Activated naive CD4-positive, alpha-beta T cell treated with anti-CD3 and anti-CD28 coated beads, Interleukin-2, amount 10 ng/mL, durations not matched to agents 7 days and 5 days (primary cell): ENCODE measurements at regions of chr5 and their contacts with region 1.

Region 1: GRCh38 chr5:170434966-170435605 is 45.9 kb upstream of the KCNMB1 start:
- DNase-seq: peak; percentile 69
- H3K4me3 Mint-ChIP-seq: no peak overlapping the region
- H3K27ac Mint-ChIP-seq: no peak overlapping the region
- H3K4me1 Mint-ChIP-seq: no peaks in the 10 kb centered on the region
- H3K27me3 Mint-ChIP-seq: peaks cover 34% of the 10 kb centered on the region

Region 2: DNA sequence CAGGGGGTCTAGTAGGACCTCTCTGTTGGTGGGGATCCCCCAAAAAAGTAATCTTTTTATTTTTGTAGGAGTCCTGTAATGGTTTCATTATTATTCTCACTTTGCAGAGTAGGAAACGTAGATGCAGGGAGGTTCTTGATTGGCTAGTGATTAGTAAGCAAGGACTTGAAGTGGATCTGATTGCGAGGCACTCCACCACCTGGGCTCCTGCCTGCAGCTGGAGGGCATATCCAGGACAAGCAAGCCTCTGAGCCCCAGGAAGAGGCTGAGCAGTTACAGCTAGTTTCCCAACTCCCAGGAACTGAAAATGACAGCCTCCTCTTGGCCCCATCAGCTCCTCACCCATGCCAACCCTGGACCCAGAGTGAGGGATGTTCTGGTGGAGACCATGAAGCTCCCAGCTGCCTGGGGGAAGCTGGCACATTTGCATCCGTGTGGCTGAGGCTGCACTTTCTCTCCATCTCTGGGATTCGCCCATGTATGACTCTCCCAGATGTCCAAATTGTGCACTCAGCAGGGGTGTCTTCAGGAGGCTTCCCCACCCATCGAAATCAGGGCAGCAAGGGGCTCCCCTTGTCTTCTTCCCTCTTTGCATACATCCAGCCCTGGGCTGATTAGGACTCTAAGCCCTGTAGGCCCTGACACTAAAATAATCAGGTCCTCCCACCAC is 78.9 kb after region 1 on chr5:
- CTCF ChIA-PET with region 1: no interaction called
- DNase-seq: no peak
- H3K4me3 Mint-ChIP-seq: no peak overlapping the region
- H3K27ac Mint-ChIP-seq: no peak overlapping the region
- H3K4me1 Mint-ChIP-seq: no peaks in the 10 kb centered on the region
- H3K27me3 Mint-ChIP-seq: peaks cover 7% of the 10 kb centered on the region

Region 3: DNA sequence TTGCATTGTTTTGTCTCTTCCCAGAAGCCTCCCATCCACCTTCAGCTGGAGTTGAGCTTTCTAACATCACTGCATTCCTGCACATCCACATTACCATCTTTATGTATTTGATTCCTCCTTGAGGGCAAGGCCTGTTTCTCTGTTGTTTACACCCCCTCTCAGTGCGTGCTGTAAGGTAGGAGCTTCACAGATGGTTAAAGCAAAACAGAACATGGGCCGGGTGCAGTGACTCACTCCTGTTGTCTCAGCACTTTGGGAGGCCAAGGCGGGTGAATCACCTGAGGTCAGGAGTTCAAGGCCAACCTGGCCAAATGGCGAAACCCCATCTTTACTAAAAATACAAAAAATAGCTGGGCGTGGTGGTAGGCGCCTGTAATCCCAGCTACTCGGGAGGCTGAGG is 179.6 kb after region 1 on chr5:
- CTCF ChIA-PET with region 1: interaction called, 18 read pairs
- DNase-seq: no peak
- H3K4me3 Mint-ChIP-seq: no peak overlapping the region
- H3K27ac Mint-ChIP-seq: no peak overlapping the region
- H3K4me1 Mint-ChIP-seq: peaks cover 6% of the 10 kb centered on the region
- H3K27me3 Mint-ChIP-seq: peaks cover 42% of the 10 kb centered on the region

Region 4: GRCh38 chr5:170623576-170624181 is 188.6 kb after region 1 on chr5:
- CTCF ChIA-PET with region 1: interaction called, 67 read pairs
- DNase-seq: peak; percentile 51
- H3K4me3 Mint-ChIP-seq: no peak overlapping the region
- H3K27ac Mint-ChIP-seq: no peak overlapping the region
- H3K4me1 Mint-ChIP-seq: no peaks in the 10 kb centered on the region
- H3K27me3 Mint-ChIP-seq: peaks cover 33% of the 10 kb centered on the region

Region 5: DNA sequence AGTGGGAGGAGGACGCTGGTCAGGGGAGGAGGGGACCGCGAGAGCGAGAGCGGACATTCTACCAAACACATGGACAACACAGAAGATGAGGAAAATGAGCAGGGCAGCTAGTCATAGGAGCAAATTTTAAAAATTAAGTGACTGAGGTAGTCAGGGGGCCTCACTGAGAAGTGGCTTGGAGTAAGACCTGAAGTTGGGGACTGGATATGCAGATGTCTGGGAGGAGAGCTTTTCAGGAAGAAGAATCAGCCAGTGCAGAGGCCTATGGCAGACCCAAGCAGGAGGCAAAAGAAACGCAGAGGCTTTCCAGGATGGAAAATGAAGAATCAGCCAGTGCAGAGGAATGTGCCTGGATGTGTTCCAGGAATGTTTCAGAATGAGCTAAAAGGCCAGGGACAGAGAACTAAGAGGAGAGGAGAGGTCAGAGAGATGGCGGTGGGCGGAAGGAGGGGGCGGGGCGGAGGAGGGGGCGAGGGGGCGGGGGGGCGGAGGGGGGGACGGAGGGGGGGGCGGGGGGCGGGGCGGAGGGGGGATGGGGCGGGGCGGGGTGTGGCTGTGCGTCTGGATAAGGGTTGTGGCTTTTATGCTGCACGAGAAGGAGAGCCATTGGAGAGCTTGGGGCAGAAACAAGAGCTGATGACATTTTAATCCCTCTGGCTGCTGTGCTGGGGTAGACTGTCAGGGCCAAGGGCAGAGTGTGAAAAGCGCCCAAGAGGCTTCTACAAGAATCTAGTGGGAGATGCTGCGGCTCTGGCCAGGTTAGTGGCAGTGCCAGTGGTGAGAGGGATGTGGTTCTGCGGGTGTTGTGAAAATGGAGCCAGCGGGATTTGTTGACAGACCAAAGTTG is 198.4 kb after region 1 on chr5:
- CTCF ChIA-PET with region 1: interaction called, 115 read pairs
- DNase-seq: no peak
- H3K4me3 Mint-ChIP-seq: no peak overlapping the region
- H3K27ac Mint-ChIP-seq: peak overlapping the region; percentile 20
- H3K4me1 Mint-ChIP-seq: peaks cover 10% of the 10 kb centered on the region
- H3K27me3 Mint-ChIP-seq: peaks cover 39% of the 10 kb centered on the region